WTC11 (cell line): ENCODE measurements at regions of chr3 and their contacts with region 1.

Region 1: DNA sequence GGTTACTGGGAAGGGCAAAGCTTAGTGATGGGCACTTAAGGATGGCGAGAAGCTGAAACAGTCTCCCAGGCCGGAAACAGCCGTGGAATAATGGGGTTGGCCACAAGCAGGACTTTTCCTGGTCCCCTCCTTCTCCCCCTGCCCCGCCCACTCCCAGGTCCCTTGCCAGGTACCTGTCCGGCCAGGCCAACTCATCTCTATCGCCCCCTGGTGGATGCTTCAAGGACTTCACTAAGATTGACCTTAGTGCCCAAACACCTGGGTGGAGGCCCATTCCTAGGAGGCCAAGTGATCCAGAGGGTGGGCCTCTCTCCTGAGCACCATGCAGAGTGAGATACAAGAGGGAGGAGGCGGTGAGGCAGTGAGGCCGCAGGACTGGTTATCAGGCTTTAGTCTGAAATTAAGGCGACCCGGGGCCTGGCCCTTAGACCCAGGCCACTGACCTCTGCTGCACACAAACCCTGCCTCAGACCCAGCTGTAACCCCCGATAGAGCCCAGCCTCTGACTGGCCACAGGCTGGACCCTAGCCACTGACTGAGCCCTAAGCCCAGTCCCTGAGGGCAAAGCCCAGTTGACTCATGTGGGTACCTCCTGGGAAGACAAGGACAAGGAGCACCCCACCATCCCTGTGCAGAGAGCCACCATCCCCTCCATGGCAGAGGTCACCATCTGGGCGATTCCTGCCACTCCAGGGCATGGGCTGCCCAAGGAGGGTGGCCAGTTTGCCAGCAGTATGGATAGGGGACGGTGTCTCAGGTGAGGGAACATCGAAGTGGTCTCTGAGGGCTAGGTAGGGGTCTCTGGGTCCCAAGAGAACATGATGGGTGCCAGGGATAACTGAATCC is 37.6 kb downstream of the VIPR1 start:
- DNase-seq: peak; percentile 95
- ATAC-seq: peak; percentile 83
- H3K4me3 Mint-ChIP-seq: no peak overlapping the region
- H3K27ac Mint-ChIP-seq: no peak overlapping the region
- H3K4me1 Mint-ChIP-seq: peaks cover 11% of the 10 kb centered on the region
- H3K27me3 Mint-ChIP-seq: no peaks in the 10 kb centered on the region
- CTCF ChIP-seq: peak; percentile 92

Region 2: GRCh38 chr3:42229942-42230688 is 310.0 kb before region 1 on chr3:
- CTCF ChIA-PET with region 1: interaction called, 25 read pairs
- POLR2A ChIA-PET with region 1: no interaction called
- DNase-seq: no peak
- ATAC-seq: peak; percentile 72
- H3K4me3 Mint-ChIP-seq: no peak overlapping the region
- H3K27ac Mint-ChIP-seq: no peak overlapping the region
- H3K4me1 Mint-ChIP-seq: peaks cover 2% of the 10 kb centered on the region
- H3K27me3 Mint-ChIP-seq: peaks cover 2% of the 10 kb centered on the region; the same call in 1 of the 2 replicates
- CTCF ChIP-seq: peak; percentile 24; the same call in 1 of the 2 replicates

Region 3: DNA sequence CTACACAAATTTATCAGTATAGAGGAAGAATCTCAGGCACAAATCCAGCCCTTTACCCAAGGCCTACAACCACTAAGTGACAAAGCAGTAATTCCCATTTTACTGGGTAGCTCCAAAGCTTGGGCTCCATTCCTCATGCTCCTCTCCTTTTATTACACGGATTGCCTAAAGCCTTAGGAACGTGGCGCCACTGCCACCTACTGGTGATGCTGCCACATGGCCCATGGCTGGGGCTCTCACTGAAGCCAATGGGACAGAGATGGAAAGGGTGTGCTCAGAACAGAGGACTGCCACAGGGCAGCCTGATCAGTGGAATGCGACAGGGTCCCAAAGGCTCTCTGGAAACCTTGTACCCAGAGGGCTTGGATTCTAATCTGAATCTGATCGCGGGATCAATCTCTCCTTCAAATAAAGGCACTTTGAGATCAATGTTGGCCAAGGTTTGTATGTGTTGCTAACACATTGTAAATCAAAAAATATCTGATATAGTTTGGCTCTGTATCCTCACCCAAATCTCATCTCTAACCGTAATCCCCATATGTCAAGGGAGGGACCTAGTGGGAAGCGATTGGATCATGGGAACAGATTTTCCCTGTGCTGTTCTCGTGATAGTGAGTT is 96.2 kb before region 1 on chr3:
- CTCF ChIA-PET with region 1: interaction called, 14 read pairs
- POLR2A ChIA-PET with region 1: no interaction called
- DNase-seq: peak; percentile 96
- ATAC-seq: peak; percentile 91
- H3K4me3 Mint-ChIP-seq: no peak overlapping the region
- H3K27ac Mint-ChIP-seq: no peak overlapping the region
- H3K4me1 Mint-ChIP-seq: peaks cover 56% of the 10 kb centered on the region
- H3K27me3 Mint-ChIP-seq: no peaks in the 10 kb centered on the region
- CTCF ChIP-seq: peak; percentile 84

Region 4: GRCh38 chr3:42502429-42503250 is 37.5 kb before region 1 on chr3 and contains the start of gene VIPR1:
- CTCF ChIA-PET with region 1: interaction called, 42 read pairs
- POLR2A ChIA-PET with region 1: interaction called, 9 read pairs
- DNase-seq: peak; percentile 95
- ATAC-seq: peak; percentile 92
- H3K4me3 Mint-ChIP-seq: peak within 1 kb of the TSS; percentile 88
- H3K27ac Mint-ChIP-seq: no peak within 1 kb of the TSS
- H3K4me1 Mint-ChIP-seq: peaks cover 41% of the 10 kb centered on the region
- H3K27me3 Mint-ChIP-seq: peaks cover 63% of the 10 kb centered on the region
- CTCF ChIP-seq: no peak
- total RNA-seq, gene VIPR1: 7.1 to 9.4 TPM (median 7.2 TPM) in 3 replicates

Region 5: GRCh38 chr3:42518800-42519567 is 21.1 kb before region 1 on chr3:
- CTCF ChIA-PET with region 1: interaction called, 18 read pairs
- POLR2A ChIA-PET with region 1: interaction called, 3 read pairs
- DNase-seq: peak; percentile 80
- ATAC-seq: peak; percentile 85
- H3K4me3 Mint-ChIP-seq: no peak overlapping the region
- H3K27ac Mint-ChIP-seq: no peak overlapping the region
- H3K4me1 Mint-ChIP-seq: 0 out of 2 replicates have a peak, but pooled peaks cover 2% of the 10 kb centered on the region
- H3K27me3 Mint-ChIP-seq: no peaks in the 10 kb centered on the region
- CTCF ChIP-seq: peak; percentile 54